PC-9 (cell line): ENCODE measurements at regions of chr4 and their contacts with region 1.

Region 1: DNA sequence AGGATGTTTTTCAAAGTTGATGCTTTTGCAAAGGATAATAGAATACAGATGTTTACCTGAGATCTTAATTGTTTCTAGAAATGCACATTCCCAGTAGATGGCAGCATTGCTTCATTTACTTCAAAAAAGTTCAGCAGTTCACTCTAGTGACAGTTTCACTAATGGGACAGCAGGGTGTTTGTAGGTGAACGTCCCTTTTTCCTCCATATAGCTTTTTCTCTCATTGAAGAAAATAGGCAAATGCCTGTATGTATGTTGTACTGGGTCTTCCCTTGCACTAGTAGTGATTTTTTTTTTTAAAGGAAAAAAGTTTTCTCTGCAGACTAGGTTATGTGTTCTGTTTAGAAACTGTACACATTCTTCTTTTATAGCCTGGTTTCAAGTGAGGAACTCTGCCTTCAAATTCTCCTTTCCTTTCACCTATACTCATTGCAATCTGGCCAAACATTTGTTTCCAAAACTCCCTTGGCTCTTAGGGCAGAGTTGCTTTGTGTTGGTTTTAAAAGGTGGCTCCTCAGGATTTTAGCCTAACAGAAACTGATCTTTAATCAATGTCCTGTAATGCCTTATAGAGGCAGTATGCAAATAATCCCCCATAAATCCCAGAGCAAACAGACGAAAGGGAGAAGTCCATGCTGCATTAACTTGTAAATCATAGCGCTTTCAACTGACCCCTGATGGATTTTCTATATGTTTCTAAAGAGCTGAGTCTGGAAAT is 86.3 kb downstream of the EGF start:
- DNase-seq: peak in 1 of 2 experiments; percentile 39
- H3K4me3 ChIP-seq: no peak overlapping the region
- H3K27ac ChIP-seq: no peak overlapping the region
- H3K4me1 ChIP-seq: no peaks in the 10 kb centered on the region
- H3K27me3 ChIP-seq: no peaks in the 10 kb centered on the region
- CTCF ChIP-seq: peak; percentile 69

Region 2: DNA sequence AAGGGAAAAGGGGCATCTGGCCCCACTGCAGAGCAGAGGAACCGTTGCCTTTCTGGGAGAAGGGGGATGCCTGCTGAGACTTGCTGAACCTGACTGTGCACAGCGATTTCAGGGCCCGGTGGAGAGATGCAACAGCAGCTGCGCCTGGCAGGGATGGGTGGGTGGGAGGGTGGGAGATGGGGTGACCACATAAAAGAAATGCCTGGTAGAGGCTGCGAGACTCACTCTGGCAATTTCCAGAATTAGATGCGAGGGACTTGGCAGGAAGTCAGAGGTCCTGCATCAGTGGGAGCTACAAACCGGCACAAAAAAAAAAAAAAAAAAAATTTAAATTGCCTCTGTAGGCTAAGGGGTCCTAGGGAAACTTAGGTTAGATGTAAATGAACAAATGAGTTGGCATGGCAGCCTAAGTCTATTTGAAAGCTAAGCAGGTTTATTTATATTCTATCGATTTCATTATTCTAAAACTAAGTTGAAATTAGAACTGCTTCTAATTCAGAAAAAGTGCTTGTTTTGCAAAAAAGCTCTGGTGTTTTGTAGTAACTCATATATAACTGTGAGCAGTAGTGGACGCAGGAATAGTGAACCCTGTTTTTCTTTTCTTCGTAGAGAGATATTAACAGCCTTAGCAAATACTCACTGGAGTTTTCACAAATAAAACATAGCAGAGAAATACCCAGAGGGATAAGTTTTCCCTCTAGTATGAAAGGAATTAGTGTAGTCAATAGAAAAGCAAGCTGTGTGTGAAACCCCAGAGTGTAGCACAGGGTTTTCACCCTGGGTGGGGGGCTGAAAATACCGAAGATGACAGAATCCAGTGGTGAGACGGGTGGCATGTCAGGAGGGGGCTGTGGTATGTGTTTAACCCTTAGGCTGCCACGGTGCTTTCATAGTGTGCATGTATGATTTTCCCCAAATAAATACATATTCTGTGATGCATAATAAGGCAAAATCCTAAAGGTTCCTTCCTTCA is 43.8 kb after region 1 on chr4:
- CTCF ChIA-PET with region 1: interaction called, 15 read pairs
- POLR2A ChIA-PET with region 1: no interaction called
- intact Hi-C with region 1: no loop called
- DNase-seq: no peak
- H3K4me3 ChIP-seq: no peak overlapping the region
- H3K27ac ChIP-seq: no peak overlapping the region
- H3K4me1 ChIP-seq: no peaks in the 10 kb centered on the region
- H3K27me3 ChIP-seq: no peaks in the 10 kb centered on the region
- CTCF ChIP-seq: no peak